ENCODE measurements at regions of chr2 and their contacts with region 1.

Region 1: GRCh38 chr2:25673300-25674076 is at the start of gene DTNB:
- DNase-seq: peak; percentile 94
- H3K4me3 Mint-ChIP-seq: peak within 1 kb of the TSS; percentile 86
- H3K27ac Mint-ChIP-seq: peak within 1 kb of the TSS; percentile 85
- H3K4me1 Mint-ChIP-seq: peaks cover 27% of the 10 kb centered on the region
- H3K27me3 Mint-ChIP-seq: peaks cover 24% of the 10 kb centered on the region
- total RNA-seq, gene DTNB: 25.8 and 30.5 TPM in 2 replicates

Region 2: GRCh38 chr2:24652265-24653182 is 1021.0 kb before region 1 on chr2:
- intact Hi-C with region 1: no loop called
- DNase-seq: no peak
- H3K4me3 Mint-ChIP-seq: no peak overlapping the region
- H3K27ac Mint-ChIP-seq: no peak overlapping the region
- H3K4me1 Mint-ChIP-seq: no peaks in the 10 kb centered on the region
- H3K27me3 Mint-ChIP-seq: no peaks in the 10 kb centered on the region

Region 3: GRCh38 chr2:25586726-25587144 is 86.8 kb before region 1 on chr2:
- intact Hi-C with region 1: loop called (anchors 1 kb)
- DNase-seq: peak; percentile 74
- H3K4me3 Mint-ChIP-seq: peak overlapping the region; percentile 36
- H3K27ac Mint-ChIP-seq: peak overlapping the region; percentile 87
- H3K4me1 Mint-ChIP-seq: peaks cover 22% of the 10 kb centered on the region
- H3K27me3 Mint-ChIP-seq: no peaks in the 10 kb centered on the region

Region 4: DNA sequence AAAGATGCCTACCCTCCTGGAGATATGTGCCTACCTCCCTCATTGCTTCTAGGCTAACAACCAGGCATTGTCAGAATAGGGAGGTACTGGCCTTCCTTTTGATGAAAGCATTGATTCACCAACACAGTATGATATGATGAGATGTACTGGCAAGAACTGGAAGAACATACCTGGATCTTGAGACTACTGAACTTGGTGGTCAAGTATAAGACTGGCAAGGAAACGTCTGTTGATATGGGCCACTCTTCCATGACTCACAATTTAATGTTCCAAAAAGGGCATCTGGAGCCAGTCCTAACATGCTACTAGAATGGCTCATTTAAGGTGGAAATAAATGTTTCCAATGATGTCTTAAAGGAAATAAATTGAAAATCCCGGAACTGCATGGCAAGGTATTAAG is 18.2 kb before region 1 on chr2:
- intact Hi-C with region 1: no loop called
- DNase-seq: no peak
- H3K4me3 Mint-ChIP-seq: no peak overlapping the region
- H3K27ac Mint-ChIP-seq: no peak overlapping the region
- H3K4me1 Mint-ChIP-seq: peaks cover 18% of the 10 kb centered on the region
- H3K27me3 Mint-ChIP-seq: no peaks in the 10 kb centered on the region

Region 5: GRCh38 chr2:25700221-25700660 is 26.8 kb after region 1 on chr2:
- intact Hi-C with region 1: loop called (anchors 1 kb)
- DNase-seq: peak; percentile 75
- H3K4me3 Mint-ChIP-seq: no peak overlapping the region
- H3K27ac Mint-ChIP-seq: no peak overlapping the region
- H3K4me1 Mint-ChIP-seq: peaks cover 3% of the 10 kb centered on the region
- H3K27me3 Mint-ChIP-seq: peaks cover 2% of the 10 kb centered on the region

Region 6: GRCh38 chr2:25714740-25715139 is 41.3 kb after region 1 on chr2:
- intact Hi-C with region 1: no loop called
- DNase-seq: no peak
- H3K4me3 Mint-ChIP-seq: no peak overlapping the region
- H3K27ac Mint-ChIP-seq: no peak overlapping the region
- H3K4me1 Mint-ChIP-seq: peaks cover 12% of the 10 kb centered on the region
- H3K27me3 Mint-ChIP-seq: peaks cover 11% of the 10 kb centered on the region

Region 7: GRCh38 chr2:25894135-25894830 is 220.8 kb after region 1 on chr2:
- intact Hi-C with region 1: no loop called
- DNase-seq: no peak
- H3K4me3 Mint-ChIP-seq: no peak overlapping the region
- H3K27ac Mint-ChIP-seq: no peak overlapping the region
- H3K4me1 Mint-ChIP-seq: no peaks in the 10 kb centered on the region
- H3K27me3 Mint-ChIP-seq: peaks cover 5% of the 10 kb centered on the region